CD8-positive, alpha-beta T cell (primary cell): ENCODE measurements at regions of chr1 and their contacts with region 1.

Region 1: DNA sequence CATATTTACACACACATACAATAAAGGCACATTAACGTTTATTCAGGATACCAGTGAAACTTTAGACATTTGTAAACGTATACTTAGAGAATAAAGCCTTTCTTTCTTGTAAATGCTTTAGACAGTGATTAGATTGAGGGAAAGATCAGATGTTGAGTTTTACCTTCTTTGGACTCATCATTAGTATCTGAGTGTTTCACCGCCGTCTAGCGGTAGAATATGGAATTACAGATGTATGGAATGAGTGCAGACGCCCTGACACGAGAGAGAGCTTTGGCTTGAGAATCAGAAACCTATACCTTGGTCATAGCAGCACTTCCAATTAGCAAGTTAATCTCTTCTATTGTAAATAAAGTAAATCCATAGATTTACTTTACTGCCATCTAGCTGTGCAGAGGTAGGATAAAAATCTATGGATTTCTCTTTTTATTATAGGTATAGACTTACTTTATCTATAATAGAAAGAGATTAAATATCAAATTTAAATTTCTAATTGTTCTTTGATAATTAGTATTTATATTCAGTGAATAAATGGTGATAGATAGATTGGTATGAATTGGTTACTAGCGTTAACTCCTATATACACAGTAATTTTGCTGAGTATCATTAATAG is 12.6 kb downstream of the FLG2 start:
- DNase-seq: peak in 8 of 9 experiments; percentile 5 to 71 (median 36)
- ATAC-seq: peak; percentile 58
- H3K4me3 ChIP-seq: no peak overlapping the region
- H3K4me3 Mint-ChIP-seq: no peak overlapping the region
- H3K27ac ChIP-seq: no peak overlapping the region
- H3K27ac Mint-ChIP-seq: no peak overlapping the region
- H3K4me1 ChIP-seq: no peaks in the 10 kb centered on the region
- H3K4me1 Mint-ChIP-seq: no peaks in the 10 kb centered on the region
- H3K27me3 ChIP-seq: no peaks in the 10 kb centered on the region
- H3K27me3 Mint-ChIP-seq: peaks cover 8% of the 10 kb centered on the region
- CTCF ChIP-seq: peak; percentile 98

Region 2: GRCh38 chr1:151898513-151898991 is 448.7 kb before region 1 on chr1:
- CTCF ChIA-PET with region 1: no interaction called
- POLR2A ChIA-PET with region 1: no interaction called
- intact Hi-C with region 1: loop called in 1 of 2 experiments (anchors 10 kb)
- DNase-seq: peak; percentile 25 to 82 (median 68)
- ATAC-seq: peak; percentile 87
- H3K4me3 ChIP-seq: peak overlapping the region; percentile 15 to 17
- H3K4me3 Mint-ChIP-seq: peak overlapping the region; percentile 78
- H3K27ac ChIP-seq: peak overlapping the region; percentile 36 to 60
- H3K27ac Mint-ChIP-seq: peak overlapping the region; percentile 98
- H3K4me1 ChIP-seq: peaks cover 45% of the 10 kb centered on the region
- H3K4me1 Mint-ChIP-seq: peaks cover 68% of the 10 kb centered on the region
- H3K27me3 ChIP-seq: no peaks in the 10 kb centered on the region
- H3K27me3 Mint-ChIP-seq: no peaks in the 10 kb centered on the region
- CTCF ChIP-seq: no peak